Left colon (tissue), 2 donors: ENCODE measurements at regions of chr14 and their contacts with region 1.

Region 1: DNA sequence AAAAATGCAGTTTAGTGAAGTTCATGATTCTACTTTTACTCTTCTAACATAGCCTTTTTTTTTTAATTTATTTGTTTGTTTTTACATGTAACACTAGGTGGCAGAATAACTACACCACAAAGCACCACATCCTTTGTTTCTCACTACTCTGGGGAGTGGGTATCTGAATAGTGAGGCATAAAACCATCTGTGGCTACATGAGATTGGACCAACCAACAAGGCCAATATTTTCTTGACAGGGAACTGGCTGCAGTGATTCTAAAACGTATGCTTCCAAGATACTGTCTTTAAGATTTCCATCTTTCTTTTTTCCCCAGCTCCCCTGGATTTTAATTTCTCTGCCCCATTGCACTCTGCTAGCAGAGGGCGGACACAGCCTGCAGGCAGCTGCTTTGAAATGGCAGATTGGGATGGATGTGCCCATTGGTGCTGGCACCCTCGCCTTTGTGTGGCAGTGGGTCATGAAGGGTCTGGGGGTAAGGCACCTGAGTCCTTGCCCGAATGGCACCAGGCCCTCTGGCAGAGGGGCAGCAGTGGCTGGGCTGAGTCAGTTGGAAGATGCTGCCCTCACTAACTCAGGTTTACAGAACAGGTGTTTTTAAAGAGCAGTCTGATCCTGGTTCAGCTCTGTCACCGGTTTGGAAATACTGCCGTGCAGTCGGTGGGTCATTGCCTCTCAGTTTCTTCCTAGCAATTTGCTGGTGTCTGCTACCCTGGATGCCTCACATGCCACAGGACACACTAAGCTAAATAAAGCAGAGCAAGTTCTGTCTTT is 429.1 kb downstream of the RAD51B start:
- DNase-seq: no peak
- ATAC-seq: peak; percentile 56

Region 2: GRCh38 chr14:67031920-67032774 is 1216.5 kb before region 1 on chr14:
- intact Hi-C with region 1: no loop called
- DNase-seq: no peak
- ATAC-seq: no peak

Region 3: GRCh38 chr14:68548194-68549056 is 299.8 kb after region 1 on chr14:
- intact Hi-C with region 1: loop called in 1 of 2 experiments (anchors 10 kb)
- DNase-seq: peak; percentile 56 to 83
- ATAC-seq: peak; percentile 63

Region 4: GRCh38 chr14:68788996-68789820 is 540.5 kb after region 1 on chr14:
- intact Hi-C with region 1: loop called in 1 of 2 experiments (anchors 2 kb)
- DNase-seq: peak; percentile 89 to 91
- ATAC-seq: peak; percentile 25

Region 5: DNA sequence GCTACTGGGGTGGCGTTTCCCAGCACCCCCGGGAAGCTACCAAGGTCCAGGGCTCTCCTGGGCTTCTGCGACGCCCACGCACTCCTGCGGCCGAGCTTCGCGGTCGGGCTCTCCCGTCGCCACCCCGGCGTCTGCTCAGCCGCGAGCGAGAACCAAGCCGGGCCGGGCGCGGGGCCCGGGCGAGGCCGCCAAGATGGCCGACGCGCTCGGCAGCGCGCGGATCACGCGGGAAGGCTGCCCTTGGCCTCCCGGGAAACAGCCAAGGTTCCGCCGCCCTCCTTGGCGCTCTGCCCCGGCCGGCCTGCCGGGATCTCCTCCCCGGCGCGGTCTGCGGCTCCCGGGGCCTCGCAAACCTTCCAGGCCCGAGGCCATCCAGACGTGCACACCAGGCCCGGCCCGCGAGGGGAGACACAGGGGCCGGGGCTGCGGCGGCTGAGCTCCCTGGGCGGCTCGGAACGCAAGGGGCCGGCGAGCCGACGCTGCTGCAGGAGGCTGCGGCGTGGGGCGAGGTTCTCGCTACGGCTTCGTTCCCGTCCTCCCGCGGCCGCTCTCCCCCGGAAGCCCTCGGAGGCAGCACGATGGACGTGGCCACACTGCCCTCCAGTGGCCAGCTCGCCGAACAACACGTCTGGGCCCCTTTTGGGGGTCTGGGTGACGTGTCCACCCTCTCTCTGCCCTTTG is 567.7 kb after region 1 on chr14:
- intact Hi-C with region 1: loop called (anchors 10 kb)
- DNase-seq: peak; percentile 86 to 93
- ATAC-seq: peak; percentile 87